Left cardiac atrium (tissue), 4 donors: ENCODE measurements at regions of chr17 and their contacts with region 1.

Region 1: GRCh38 chr17:50114849-50115357 is 15.1 kb downstream of the SAMD14 start:
- DNase-seq: no peak
- ATAC-seq: no peak

Region 2: GRCh38 chr17:50047488-50048126 is 67.3 kb before region 1 on chr17:
- intact Hi-C with region 1: no loop called
- DNase-seq: no peak
- ATAC-seq: peak in 1 of 2 donors; percentile 28

Region 3: DNA sequence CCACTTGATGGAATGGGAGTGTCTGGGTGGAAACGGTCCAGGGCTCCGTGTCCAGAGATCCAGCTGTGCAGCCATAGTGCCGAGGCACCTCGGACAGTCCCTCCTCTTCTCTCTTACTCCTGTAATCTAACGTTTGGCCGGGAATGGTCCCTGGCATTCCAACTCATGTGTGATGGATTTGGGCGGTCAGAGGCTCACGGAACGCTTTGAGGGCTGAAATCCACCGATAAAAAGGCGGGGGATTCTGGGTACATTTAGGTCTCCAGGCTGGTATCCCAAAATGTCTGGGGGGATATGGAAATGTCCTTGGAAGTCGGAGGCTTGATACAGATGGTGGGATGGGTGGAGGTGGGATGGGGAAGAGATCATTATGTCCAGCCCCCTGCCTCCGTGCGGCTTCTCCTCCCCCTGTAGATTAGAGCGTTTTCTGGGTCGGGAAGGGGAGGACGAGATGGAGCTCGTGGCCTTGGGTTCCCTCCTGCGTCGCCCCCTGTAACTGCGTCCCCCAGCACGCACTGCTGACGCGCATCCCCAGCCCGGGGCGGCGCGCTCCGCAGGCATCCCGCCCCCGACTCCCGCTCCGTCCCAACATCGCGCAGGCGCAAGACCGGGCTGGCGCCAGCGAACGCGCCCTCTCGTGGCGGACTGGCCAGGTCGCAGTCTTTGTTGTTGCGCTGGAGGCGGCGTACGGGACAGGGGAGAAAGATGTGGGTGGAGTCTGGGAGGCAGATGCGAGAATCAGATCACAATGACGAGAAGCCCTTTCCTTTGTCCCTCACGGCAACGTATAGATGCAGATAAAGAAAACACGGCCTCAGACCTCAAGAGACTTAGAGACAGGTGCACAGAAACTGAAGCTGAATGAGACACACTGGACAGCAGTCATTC is 46.4 kb after region 1 on chr17:
- intact Hi-C with region 1: loop called in 1 of 2 experiments (anchors 10 kb)
- DNase-seq: peak; percentile 91
- ATAC-seq: peak; percentile 91 to 92

Region 4: DNA sequence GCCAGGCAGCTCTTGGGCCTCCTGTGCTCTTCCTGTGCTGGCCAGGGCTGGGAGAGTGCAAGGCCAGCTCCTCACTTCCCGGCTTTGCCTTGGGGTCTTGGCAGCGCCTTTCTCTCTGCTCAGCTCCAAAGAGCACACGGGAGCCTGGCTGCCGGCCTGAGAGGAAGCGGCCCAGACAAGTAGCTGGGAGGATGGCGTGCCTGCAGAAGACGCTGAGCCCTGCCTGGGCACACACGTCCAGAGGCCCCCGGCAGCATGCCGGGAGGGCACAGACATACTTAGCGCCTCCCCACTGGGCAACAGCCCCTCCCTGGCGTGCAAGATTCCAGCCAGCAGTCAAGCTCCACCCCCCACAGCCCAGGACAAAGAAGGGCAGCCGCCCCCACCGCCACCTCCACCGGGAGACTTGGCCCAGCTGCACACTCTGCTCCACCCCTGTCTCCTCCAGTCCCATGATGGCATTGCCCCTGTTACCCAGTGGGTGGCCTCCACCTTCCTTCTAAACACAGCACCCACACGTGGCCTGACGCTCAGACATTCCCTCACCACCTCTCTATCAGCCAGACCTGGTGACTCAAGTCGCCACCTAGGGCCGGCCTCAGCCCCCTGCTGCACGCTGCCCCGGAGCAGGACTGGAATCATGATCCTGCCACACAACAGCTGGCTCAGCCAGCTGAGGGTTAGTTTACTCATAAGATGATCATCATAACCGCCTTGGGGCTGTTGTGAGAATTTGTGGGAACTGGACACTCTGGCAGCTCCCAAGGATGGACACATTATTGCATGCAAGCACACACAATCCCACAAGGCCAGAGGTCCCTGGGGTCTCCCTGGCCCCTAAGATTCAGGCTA is 63.3 kb after region 1 on chr17:
- intact Hi-C with region 1: loop called in 1 of 2 experiments (anchors 10 kb)
- DNase-seq: peak; percentile 83
- ATAC-seq: peak; percentile 83 to 84

Region 5: DNA sequence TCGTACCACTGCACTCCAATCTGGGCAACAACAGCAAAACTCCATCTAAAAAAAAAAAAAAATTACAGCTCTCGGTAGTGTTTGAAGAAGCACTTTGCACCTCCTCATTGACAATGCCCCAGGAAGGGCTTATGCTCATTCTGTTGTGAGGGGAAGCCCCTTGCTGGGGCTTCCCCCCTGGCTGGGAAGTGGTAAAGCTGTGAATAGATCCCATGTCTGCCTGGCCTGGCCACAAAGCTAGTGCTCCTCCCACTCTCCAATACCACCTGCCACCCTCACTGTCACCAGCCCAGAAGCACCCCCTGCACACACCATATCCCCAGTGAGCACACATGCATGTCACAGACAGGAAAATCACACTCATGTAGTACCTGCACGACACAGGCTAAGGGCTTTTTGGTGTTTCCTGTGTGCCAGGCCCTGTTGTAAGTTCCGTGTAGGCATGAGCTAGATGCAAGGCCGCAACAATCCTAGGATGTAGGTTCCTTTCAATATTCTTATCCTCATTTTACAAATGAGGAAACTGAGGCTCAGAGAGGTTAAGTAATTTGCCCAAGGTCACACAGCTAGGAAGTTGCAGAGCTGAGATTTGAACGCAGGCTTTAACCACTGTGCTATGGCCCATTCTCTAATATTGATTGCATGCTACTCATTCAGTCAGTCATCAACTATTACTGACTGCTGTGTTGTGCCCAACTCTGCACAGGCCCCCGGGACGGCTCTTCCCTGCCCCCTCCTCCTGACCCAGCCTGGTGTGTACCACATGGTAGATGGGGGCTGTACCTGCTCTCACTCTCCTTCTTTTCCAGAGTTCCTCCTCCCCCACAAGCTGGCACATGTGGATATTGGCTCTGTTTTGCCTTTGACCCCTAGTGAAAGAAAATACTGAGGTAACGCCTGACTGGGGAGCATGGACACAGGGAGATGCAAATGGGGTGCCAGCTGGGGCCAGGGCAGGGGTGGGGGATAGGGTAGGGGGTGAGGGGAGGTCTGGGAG is 98.4 kb after region 1 on chr17:
- intact Hi-C with region 1: no loop called
- DNase-seq: no peak
- ATAC-seq: no peak